MCF 10A (cell line): ENCODE measurements at regions of chr2 and their contacts with region 1.

Region 1: DNA sequence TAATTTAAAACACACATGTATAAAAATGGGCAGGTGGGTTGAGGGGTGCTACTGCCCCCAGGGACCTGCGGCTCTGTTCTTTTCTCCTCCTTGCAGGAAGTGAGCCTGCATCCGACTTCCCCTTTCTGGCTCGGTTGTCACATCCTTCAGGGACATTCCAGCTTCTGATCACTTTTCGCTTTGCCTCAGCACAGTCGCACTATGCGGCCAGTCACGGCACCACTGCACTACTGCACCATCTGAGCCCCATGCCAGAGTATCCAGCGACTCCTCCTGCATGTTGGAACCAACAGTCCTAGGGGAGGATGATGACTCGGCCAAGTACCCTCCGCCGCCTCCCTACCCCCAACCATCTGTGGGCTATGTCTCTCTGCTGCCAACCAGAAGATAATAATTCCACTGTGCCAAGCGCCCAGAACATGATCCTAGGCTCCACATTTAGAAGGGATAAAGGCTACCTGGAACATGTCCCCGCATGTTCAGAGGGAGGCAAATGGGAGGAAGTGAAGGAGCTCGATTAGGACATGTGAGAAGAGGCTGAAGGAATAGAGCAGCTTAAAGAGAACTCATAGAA is 17.6 kb downstream of the CDC42EP3 start:
- DNase-seq: peak; percentile 89
- H3K4me3 Mint-ChIP-seq: peak overlapping the region; percentile 33
- H3K27ac Mint-ChIP-seq: peak overlapping the region; percentile 97
- H3K4me1 Mint-ChIP-seq: peaks cover 75% of the 10 kb centered on the region
- H3K27me3 Mint-ChIP-seq: no peaks in the 10 kb centered on the region
- CTCF ChIP-seq: no peak

Region 2: DNA sequence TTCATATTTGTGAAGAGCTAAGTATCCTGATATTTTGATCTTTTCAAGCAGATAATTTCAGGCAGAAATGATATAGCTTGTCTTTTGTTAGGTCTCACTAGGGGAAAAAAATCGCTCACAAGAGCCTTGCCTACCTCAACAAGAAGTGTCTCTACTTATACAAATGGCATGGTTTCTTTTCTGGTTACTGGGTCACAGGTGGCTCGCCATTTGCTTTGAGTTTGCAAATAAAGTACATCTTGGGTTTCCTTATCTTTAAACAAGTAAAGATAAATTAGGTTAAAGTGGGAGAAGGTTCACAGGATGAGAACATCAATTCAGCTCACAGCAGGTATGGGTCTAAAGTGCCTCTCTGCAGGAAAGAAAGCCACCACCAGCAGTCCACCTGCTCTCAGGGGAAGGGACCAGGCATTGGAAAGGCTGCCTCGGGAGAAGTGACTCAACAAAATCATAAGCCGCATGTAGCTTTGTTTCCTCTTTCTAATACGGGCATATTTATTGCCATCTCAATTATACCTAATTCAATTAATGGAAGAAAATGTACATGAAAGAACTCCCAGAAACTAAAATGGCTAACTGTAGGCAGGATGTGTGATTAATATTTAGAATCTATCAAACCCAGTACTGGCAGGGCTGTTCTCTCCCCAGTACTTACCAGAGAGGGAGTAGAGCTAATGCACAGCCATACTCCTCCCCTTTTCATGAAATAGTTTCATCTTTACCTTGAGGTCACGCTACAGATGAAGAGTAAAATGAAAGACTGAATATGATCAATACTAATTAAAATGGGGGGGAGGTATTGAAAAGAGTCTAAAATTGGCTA is 10.8 kb before region 1 on chr2:
- CTCF ChIA-PET with region 1: no interaction called
- POLR2A ChIA-PET with region 1: interaction called, 11 read pairs
- intact Hi-C with region 1: no loop called
- DNase-seq: no peak
- H3K4me3 Mint-ChIP-seq: no peak overlapping the region
- H3K27ac Mint-ChIP-seq: peak overlapping the region; percentile 2
- H3K4me1 Mint-ChIP-seq: peaks cover 21% of the 10 kb centered on the region
- H3K27me3 Mint-ChIP-seq: no peaks in the 10 kb centered on the region
- CTCF ChIP-seq: no peak

Region 3: GRCh38 chr2:37802899-37803379 is 149.0 kb after region 1 on chr2:
- CTCF ChIA-PET with region 1: no interaction called
- POLR2A ChIA-PET with region 1: interaction called, 3 read pairs
- intact Hi-C with region 1: loop called (anchors 5 kb)
- DNase-seq: peak; percentile 74
- H3K4me3 Mint-ChIP-seq: no peak overlapping the region
- H3K27ac Mint-ChIP-seq: peak overlapping the region; percentile 86
- H3K4me1 Mint-ChIP-seq: peaks cover 27% of the 10 kb centered on the region
- H3K27me3 Mint-ChIP-seq: no peaks in the 10 kb centered on the region
- CTCF ChIP-seq: no peak

Region 4: DNA sequence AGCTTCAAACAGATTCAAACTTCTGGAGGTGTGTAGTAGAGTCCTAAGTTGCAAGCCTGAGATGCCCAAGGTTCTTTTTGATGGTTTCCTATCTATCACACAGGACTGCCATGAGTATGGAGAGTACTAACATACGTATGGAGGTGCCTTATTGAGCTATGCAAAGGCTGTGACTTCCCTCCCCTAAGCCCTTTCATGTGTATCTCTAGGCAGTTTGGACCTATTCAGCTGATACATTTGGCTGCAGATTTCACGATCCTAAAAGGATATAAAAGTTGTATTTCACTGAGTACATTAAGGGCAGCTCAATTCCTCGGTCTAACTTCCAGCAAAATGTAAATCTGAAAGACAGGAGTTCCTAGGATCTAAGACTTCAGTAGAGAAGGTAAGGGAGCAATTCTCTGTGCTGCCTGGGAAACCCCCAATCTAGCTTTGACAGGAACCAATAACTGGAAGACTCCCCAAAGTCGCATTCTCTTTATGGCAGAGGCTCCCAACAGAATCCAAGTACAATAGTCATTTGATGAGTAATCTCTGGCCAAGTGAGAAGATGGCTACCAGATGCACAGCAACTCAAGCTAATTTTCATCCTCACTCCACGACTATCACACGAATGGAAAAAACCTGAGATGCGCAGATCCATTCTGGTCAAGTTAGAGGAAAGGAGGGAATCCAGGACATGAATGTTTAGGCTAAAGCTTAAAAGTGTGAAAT is 639.4 kb after region 1 on chr2:
- CTCF ChIA-PET with region 1: no interaction called
- POLR2A ChIA-PET with region 1: no interaction called
- intact Hi-C with region 1: no loop called
- DNase-seq: no peak
- H3K4me3 Mint-ChIP-seq: no peak overlapping the region
- H3K27ac Mint-ChIP-seq: no peak overlapping the region
- H3K4me1 Mint-ChIP-seq: peaks cover 6% of the 10 kb centered on the region
- H3K27me3 Mint-ChIP-seq: no peaks in the 10 kb centered on the region
- CTCF ChIP-seq: no peak